HEK293 (cell line): ENCODE measurements at regions of chr3 and their contacts with region 1.

Region 1: GRCh38 chr3:50350527-50351322 is at the starts of genes CYB561D2 and NPRL2:
- H3K4me3 ChIP-seq: peak within 1 kb of the TSS; percentile 72
- H3K27ac ChIP-seq: peak within 1 kb of the TSS; percentile 63
- H3K4me1 ChIP-seq: peaks cover 4% of the 10 kb centered on the region; the same call in 1 of the 2 replicates
- CTCF ChIP-seq: no peak

Region 2: GRCh38 chr3:50481992-50482391 is 131.3 kb after region 1 on chr3:
- CTCF ChIA-PET with region 1: no interaction called
- POLR2A ChIA-PET with region 1: no interaction called
- H3K4me3 ChIP-seq: no peak overlapping the region
- H3K27ac ChIP-seq: no peak overlapping the region
- H3K4me1 ChIP-seq: no peaks in the 10 kb centered on the region
- CTCF ChIP-seq: no peak

Region 3: GRCh38 chr3:50542177-50543034 is 191.7 kb after region 1 on chr3:
- CTCF ChIA-PET with region 1: interaction called, 16 read pairs
- POLR2A ChIA-PET with region 1: interaction called, 5 read pairs
- H3K4me3 ChIP-seq: no peak overlapping the region
- H3K27ac ChIP-seq: no peak overlapping the region
- H3K4me1 ChIP-seq: no peaks in the 10 kb centered on the region
- CTCF ChIP-seq: peak; percentile 70

Region 4: DNA sequence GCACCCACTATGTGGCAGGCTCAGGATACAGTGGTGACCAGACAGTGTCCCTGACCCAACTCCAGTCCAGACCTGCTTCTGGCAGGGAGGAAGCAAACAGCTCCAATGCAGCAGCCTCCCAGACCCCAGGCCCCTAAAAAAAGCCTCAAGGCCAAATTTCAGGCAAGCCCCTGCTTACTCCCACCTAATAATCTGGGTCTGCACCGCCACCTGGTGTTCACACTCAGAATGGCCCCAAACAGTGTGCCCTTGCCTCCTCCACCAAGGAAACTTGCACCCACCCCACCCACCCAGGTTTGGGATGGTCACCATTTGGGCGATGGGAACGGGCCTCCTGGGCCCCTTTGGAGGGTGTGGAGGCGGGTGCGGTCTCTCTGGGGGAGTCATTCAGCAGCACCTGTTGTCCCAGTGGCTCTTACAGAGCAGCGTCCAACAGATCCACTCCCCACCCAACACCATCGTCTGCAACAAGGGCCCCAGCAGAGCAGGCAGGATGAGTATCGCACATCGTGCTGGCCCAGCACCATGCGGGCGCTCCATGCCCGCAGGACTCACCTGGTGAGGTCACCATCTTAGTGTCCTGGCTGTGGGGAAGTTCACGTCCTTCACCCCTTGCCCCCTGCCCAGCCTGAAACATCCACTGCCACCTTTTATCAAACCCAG is 199.5 kb after region 1 on chr3:
- CTCF ChIA-PET with region 1: interaction called, 27 read pairs
- POLR2A ChIA-PET with region 1: no interaction called
- H3K4me3 ChIP-seq: no peak overlapping the region
- H3K27ac ChIP-seq: no peak overlapping the region
- H3K4me1 ChIP-seq: no peaks in the 10 kb centered on the region
- CTCF ChIP-seq: no peak

Region 5: DNA sequence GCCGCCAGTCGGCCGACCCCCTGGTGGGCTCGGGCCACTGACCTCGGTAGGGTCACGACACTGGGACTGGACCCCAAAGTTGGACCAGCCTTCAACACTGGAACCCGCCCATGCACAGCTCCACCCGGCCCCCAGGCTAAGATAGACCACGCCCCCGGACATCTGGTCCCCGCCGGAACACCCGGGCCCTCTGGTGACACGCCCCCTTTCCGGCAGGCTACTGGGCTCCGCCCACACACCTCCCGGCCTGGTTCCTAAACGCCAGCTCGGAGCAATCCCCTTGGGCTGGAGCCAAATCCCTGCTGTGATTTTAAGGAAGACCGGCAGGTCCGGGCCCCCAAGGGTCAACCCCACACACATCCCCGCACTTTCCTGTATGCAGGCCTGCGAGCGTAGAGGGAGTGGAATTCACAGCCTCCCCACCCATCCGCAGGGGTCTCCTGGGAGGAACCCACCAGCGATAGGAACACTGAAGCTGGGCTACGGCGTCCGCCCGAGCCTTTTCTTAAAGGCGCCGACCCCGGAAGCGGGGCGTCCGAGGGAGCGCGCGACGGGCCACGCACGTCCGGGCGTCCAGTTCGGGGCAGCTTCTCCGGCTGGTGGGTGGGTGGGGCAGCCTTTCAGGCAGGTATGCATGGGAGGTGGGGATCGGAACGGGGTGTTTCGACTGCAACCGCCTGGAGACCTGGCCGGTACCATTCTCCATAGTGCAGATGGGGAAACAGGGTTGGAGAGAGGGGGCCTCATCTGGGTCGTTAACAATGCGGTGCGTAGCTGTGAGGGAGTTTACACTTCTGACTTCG is 218.4 kb after region 1 on chr3 and contains the start of gene HEMK1:
- CTCF ChIA-PET with region 1: no interaction called
- POLR2A ChIA-PET with region 1: interaction called, 10 read pairs
- H3K4me3 ChIP-seq: peak within 1 kb of the TSS; percentile 53
- H3K27ac ChIP-seq: peak within 1 kb of the TSS; percentile 44; the same call in 1 of the 2 replicates
- H3K4me1 ChIP-seq: no peaks in the 10 kb centered on the region; the same call in 1 of the 2 replicates
- CTCF ChIP-seq: no peak